HAP-1 (cell line): ENCODE measurements at regions of chr9 and their contacts with region 1.

Region 1: GRCh38 chr9:124415102-124415851 is at the start of gene PSMB7:
- DNase-seq: peak; percentile 96 to 98
- H3K4me3 ChIP-seq: peak within 1 kb of the TSS; percentile 78
- H3K4me1 ChIP-seq: peaks cover 4% of the 10 kb centered on the region
- H3K27me3 ChIP-seq: no peaks in the 10 kb centered on the region

Region 2: GRCh38 chr9:124532897-124533296 is 117.6 kb after region 1 on chr9:
- in situ Hi-C with region 1: loop called (anchors 5 kb)
- DNase-seq: no peak
- H3K4me3 ChIP-seq: no peak overlapping the region
- H3K4me1 ChIP-seq: no peaks in the 10 kb centered on the region
- H3K27me3 ChIP-seq: no peaks in the 10 kb centered on the region

Region 3: GRCh38 chr9:124721109-124721906 is 306.0 kb after region 1 on chr9:
- in situ Hi-C with region 1: loop called (anchors 25 kb)
- DNase-seq: no peak
- H3K4me3 ChIP-seq: no peak overlapping the region
- H3K4me1 ChIP-seq: peaks cover 18% of the 10 kb centered on the region
- H3K27me3 ChIP-seq: no peaks in the 10 kb centered on the region